Naive thymus-derived CD4-positive, alpha-beta T cell (primary cell): ENCODE measurements at regions of chr12 and their contacts with region 1.

Region 1: DNA sequence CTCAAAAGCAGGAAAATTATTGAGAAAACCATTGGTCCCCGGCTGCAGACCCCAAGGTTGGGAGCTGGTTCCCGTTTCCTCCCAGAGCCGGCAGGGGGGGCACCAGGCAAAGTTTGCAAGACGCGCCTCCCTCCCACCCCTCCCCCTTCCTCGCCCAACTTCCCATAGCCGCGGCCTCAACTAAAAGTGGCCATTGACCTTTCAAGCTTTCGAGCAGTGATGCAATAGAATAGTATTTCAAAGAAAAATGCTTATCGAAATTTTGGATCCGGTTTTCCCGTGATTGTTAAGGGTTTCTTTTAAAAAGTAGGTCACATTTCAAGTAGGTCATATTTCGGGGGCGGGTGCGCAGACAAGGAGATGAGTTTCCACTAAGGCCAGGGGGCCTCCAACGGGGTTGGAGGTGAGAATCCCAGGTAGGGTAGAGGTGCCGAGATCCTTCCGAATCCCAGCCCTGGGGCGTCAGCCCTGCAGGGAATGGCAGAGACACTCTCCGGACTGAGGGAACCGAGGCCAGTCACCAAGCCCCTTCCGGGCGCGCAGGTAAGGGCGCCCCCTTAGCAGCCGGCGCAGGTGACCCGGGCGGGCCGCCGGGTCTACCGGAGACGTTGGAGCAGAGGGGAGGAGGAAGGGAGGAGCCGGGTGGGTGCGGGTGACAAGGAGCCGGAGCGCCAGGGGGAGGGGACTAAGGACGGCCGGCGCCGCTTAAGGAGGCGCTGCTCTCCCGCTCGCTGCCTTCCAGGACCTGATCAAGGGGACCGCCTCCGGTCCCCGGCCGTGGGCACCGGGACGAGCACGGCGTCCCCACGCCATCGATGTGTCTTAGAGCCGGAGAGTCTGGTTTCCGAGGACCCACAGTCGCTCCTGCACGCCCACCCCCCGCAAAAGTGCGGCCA is 2.6 kb upstream of the SOCS2 start:
- DNase-seq: peak; percentile 34 to 76 (median 66)
- ATAC-seq: peak; percentile 58
- H3K4me3 ChIP-seq: peak overlapping the region; percentile 89
- H3K4me3 Mint-ChIP-seq: peak overlapping the region; percentile 88 to 98 (median 93)
- H3K27ac ChIP-seq: peak overlapping the region; percentile 78
- H3K27ac Mint-ChIP-seq: peak overlapping the region; percentile 70 to 91 (median 84)
- H3K4me1 ChIP-seq: peaks cover 14 to 16% of the 10 kb centered on the region in 2 donors
- H3K4me1 Mint-ChIP-seq: peaks cover 24 to 37% (median 30%) of the 10 kb centered on the region in 7 donors
- H3K27me3 ChIP-seq: no peaks in the 10 kb centered on the region
- H3K27me3 Mint-ChIP-seq: peaks cover 0 to 15% (median 0%) of the 10 kb centered on the region in 5 donors

Region 2: GRCh38 chr12:92928962-92929915 is 640.7 kb before region 1 on chr12 and contains the start of gene EEA1:
- CTCF ChIA-PET with region 1: no interaction called
- POLR2A ChIA-PET with region 1: no interaction called
- intact Hi-C with region 1: loop called in 1 of 2 experiments (anchors 1 kb)
- DNase-seq: peak; percentile 89 to 96 (median 91)
- ATAC-seq: peak; percentile 93
- H3K4me3 ChIP-seq: peak within 1 kb of the TSS; percentile 71
- H3K4me3 Mint-ChIP-seq: peak within 1 kb of the TSS; percentile 75 to 94 (median 91)
- H3K27ac ChIP-seq: peak within 1 kb of the TSS; percentile 96
- H3K27ac Mint-ChIP-seq: peak within 1 kb of the TSS; percentile 89 to 99 (median 93)
- H3K4me1 ChIP-seq: peaks cover 19 to 23% of the 10 kb centered on the region in 2 donors
- H3K4me1 Mint-ChIP-seq: peaks cover 20 to 53% (median 37%) of the 10 kb centered on the region in 7 donors
- H3K27me3 ChIP-seq: no peaks in the 10 kb centered on the region
- H3K27me3 Mint-ChIP-seq: peaks cover 0 to 6% (median 0%) of the 10 kb centered on the region in 5 donors
- total RNA-seq, gene EEA1: 20.9 to 28.3 (median 27.9) TPM

Region 3: DNA sequence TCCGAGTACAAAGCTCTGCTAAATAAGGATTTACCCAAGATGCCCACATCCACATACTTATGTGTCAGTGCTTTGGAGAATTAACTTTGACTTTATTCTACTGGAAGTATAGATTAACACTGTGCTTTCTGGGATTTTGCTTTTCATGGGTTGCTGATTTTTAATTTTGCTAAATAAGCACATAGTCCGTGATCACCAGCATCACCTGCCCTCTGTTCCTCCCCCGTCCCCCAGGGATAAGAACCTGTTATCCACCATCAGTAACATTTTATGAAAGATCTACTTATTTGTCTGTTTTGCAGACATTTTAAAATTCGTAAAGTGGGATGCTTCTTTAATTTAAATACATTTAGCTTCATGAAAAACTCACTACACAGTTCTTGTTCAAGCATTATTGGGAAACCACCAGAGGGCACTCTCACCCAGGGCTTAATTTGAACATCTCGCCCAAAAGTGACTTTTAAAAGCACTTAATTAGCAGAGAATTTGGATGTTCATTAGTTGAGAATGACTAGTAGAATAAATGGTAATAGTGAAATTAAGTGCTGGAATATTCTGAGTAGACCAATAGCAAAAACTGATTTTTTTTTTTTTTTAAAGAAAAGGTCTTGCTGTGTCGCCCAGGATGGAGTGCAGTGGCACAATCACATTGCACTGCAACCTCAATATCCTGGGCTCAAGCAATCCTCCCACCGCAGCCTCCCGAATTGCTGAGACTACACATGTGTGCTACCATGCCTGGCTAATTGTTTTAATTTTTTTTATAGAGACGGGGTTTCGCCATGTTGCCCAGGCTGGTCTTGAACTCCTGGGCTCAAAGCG is 66.9 kb before region 1 on chr12:
- CTCF ChIA-PET with region 1: interaction called, 24 read pairs
- POLR2A ChIA-PET with region 1: no interaction called
- intact Hi-C with region 1: loop called (anchors 1 to 2 kb)
- DNase-seq: peak; percentile 16 to 71 (median 54)
- ATAC-seq: peak; percentile 67
- H3K4me3 ChIP-seq: no peak overlapping the region
- H3K4me3 Mint-ChIP-seq: no peak overlapping the region
- H3K27ac ChIP-seq: no peak overlapping the region
- H3K27ac Mint-ChIP-seq: peak overlapping the region in 3 of 9 donors; percentile 36 to 69 (median 60)
- H3K4me1 ChIP-seq: no peaks in the 10 kb centered on the region
- H3K4me1 Mint-ChIP-seq: peaks cover 0 to 29% (median 0%) of the 10 kb centered on the region in 7 donors
- H3K27me3 ChIP-seq: no peaks in the 10 kb centered on the region
- H3K27me3 Mint-ChIP-seq: no peaks in the 10 kb centered on the region

Region 4: DNA sequence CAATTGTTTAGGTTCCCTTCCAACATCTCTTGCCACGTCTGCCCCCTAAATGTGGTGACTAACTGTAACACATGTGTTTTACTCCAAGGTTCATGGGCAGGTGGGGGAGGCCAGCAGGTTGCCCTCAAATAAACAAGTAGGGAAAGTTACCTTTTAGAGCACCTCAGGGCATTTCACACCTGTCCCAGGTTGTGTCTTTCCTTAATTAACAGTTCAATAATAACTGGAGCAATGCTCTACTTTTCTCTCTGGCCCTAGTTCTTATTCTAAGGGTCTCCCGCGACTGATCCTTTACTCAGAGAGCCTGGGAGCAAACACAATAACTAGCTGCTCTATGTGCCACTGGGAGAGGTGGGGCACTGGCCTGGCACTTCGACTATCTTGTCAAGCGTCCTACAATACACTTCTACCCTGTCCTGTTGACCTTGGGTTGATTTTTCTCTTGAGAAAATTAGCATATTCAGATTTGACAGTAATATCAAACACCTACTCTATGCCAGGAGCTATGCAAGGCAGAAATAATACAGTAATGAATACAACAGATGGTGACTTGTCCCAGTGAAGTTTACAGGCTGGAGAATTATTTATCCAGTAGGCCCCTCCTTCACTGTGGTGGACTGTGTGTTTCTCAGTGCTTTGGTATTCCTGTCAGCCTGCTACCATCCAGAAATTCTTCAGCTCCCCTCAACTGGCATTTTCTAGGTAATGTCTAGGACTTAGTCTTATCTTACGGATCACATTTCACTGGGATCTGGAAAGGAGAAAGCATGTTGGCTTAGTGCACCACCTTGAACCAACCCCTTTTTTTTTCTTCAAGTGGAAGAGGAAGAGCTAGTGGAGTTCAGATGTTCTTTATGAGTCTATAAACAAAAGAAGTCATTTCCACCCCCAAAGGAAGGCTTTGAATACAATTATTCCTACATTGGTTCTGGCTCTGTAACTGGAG is 309.8 kb after region 1 on chr12:
- CTCF ChIA-PET with region 1: no interaction called
- POLR2A ChIA-PET with region 1: no interaction called
- intact Hi-C with region 1: loop called in 1 of 2 experiments (anchors 5 kb)
- DNase-seq: no peak
- ATAC-seq: no peak
- H3K4me3 ChIP-seq: no peak overlapping the region
- H3K4me3 Mint-ChIP-seq: peak overlapping the region in 5 of 10 donors; percentile 5 to 71 (median 39)
- H3K27ac ChIP-seq: no peak overlapping the region
- H3K27ac Mint-ChIP-seq: peak overlapping the region in 8 of 9 donors; percentile 53 to 94 (median 72)
- H3K4me1 ChIP-seq: peaks cover 0 to 9% of the 10 kb centered on the region in 2 donors
- H3K4me1 Mint-ChIP-seq: peaks cover 7 to 39% (median 19%) of the 10 kb centered on the region in 7 donors
- H3K27me3 ChIP-seq: no peaks in the 10 kb centered on the region
- H3K27me3 Mint-ChIP-seq: peaks cover 0 to 3% (median 0%) of the 10 kb centered on the region in 5 donors

Region 5: GRCh38 chr12:94101738-94102660 is 532.1 kb after region 1 on chr12:
- CTCF ChIA-PET with region 1: interaction called, 114 read pairs
- POLR2A ChIA-PET with region 1: interaction called, 8 read pairs
- intact Hi-C with region 1: loop called (anchors 1 kb)
- DNase-seq: peak; percentile 61 to 86 (median 82)
- ATAC-seq: peak; percentile 91
- H3K4me3 ChIP-seq: peak overlapping the region; percentile 77
- H3K4me3 Mint-ChIP-seq: peak overlapping the region; percentile 88 to 95 (median 90)
- H3K27ac ChIP-seq: peak overlapping the region; percentile 69
- H3K27ac Mint-ChIP-seq: peak overlapping the region; percentile 30 to 86 (median 76)
- H3K4me1 ChIP-seq: peaks cover 0 to 13% of the 10 kb centered on the region in 2 donors
- H3K4me1 Mint-ChIP-seq: peaks cover 11 to 30% (median 25%) of the 10 kb centered on the region in 7 donors
- H3K27me3 ChIP-seq: no peaks in the 10 kb centered on the region
- H3K27me3 Mint-ChIP-seq: peaks cover 0 to 19% (median 10%) of the 10 kb centered on the region in 5 donors

Region 6: DNA sequence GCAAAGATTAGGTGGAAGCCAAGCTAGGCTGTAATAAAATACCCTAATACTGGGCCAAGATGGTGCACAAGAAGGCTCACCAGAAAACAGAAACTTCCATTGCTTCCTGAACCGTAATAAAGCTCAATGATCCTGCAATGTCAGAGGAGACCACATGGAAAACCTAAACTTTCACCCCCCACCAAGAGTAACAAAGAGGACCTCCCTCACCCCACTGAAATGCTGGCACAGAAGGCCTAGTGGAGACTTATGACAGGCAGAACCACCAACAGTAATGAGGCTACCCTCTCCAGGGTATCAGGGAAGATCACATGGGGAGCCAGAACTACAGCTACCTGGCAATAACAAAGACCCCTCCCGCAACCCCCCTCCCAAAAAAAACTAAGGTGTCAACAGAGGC is 846.7 kb after region 1 on chr12:
- CTCF ChIA-PET with region 1: no interaction called
- POLR2A ChIA-PET with region 1: no interaction called
- intact Hi-C with region 1: no loop called
- DNase-seq: no peak
- ATAC-seq: no peak
- H3K4me3 ChIP-seq: no peak overlapping the region
- H3K4me3 Mint-ChIP-seq: no peak overlapping the region
- H3K27ac ChIP-seq: no peak overlapping the region
- H3K27ac Mint-ChIP-seq: no peak overlapping the region
- H3K4me1 ChIP-seq: no peaks in the 10 kb centered on the region
- H3K4me1 Mint-ChIP-seq: peaks cover 0 to 10% (median 0%) of the 10 kb centered on the region in 7 donors
- H3K27me3 ChIP-seq: no peaks in the 10 kb centered on the region
- H3K27me3 Mint-ChIP-seq: no peaks in the 10 kb centered on the region

Region 7: DNA sequence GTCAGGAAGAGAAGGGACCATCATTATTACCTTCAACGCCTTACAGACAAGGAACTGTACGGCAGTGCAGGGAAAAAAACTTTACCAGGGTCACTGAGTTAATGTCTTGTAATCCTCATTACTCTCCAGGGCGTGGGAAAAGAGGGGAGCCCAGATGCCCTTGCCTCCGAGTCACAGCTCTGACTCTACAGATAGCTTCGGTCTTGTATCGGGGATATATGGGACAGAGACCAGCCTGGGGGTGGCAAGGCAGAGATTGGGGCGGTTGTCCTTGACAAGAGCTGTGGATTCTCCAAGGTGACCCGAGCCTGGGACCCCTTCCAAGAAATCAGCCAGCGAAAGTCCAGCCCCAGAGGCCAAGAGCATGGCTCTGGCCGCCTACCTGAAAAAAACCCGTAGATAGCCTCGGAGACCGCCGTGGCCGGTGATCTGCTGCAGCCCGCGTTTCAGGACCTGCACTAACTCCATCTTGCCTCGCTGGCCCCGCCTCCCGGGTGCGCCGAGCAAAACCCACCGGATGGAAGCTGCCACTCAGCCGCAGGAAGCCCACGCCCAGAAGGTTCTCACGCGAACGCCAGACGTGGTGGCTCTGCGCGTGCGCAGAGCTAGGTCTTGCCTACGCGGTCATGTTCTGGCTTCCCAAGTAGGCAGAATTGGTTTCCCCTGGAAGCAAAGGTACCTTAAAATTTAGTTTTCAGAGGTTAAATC is 1433.5 kb after region 1 on chr12 and contains the start of gene NDUFA12:
- CTCF ChIA-PET with region 1: no interaction called
- POLR2A ChIA-PET with region 1: no interaction called
- intact Hi-C with region 1: loop called in 1 of 2 experiments (anchors 5 kb)
- DNase-seq: peak; percentile 89 to 95 (median 92)
- ATAC-seq: peak; percentile 100
- H3K4me3 ChIP-seq: peak within 1 kb of the TSS; percentile 72
- H3K4me3 Mint-ChIP-seq: peak within 1 kb of the TSS; percentile 87 to 97 (median 96)
- H3K27ac ChIP-seq: peak within 1 kb of the TSS; percentile 84
- H3K27ac Mint-ChIP-seq: peak within 1 kb of the TSS; percentile 86 to 97 (median 95)
- H3K4me1 ChIP-seq: peaks cover 27 to 56% of the 10 kb centered on the region in 2 donors
- H3K4me1 Mint-ChIP-seq: peaks cover 39 to 79% (median 64%) of the 10 kb centered on the region in 7 donors
- H3K27me3 ChIP-seq: no peaks in the 10 kb centered on the region
- H3K27me3 Mint-ChIP-seq: no peaks in the 10 kb centered on the region
- total RNA-seq, gene NDUFA12: 57.8 to 123 (median 68.5) TPM